OCI-LY7 (cell line): ENCODE measurements at regions of chr2 and their contacts with region 1.

Region 1: GRCh38 chr2:85538486-85539360 is at the start of gene MAT2A:
- DNase-seq: peak; percentile 95
- H3K4me3 ChIP-seq: peak within 1 kb of the TSS; percentile 100
- H3K27ac ChIP-seq: peak within 1 kb of the TSS; percentile 88
- H3K4me1 ChIP-seq: peaks cover 37% of the 10 kb centered on the region
- CTCF ChIP-seq: peak; percentile 78
- total RNA-seq, gene MAT2A: 336 and 350 TPM in 2 replicates

Region 2: DNA sequence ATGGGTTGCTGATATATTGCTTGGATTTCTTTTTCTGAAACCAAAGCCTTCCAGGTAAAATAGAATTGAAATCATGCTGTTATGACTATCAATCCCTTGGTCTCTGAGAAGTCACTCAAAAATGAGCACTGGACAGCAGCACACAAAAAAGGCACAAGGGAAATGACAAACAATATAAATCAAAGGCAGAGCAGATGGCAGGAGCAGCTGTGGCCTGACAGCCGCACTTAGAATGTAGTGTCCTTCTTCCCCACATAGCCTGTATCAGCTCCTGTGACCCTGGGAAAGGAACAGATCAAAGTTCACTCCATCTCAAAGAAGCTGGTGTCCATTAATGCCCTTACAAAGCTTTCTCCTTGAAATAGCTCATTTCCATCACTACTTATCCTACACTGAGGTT is 1406.4 kb before region 1 on chr2:
- CTCF ChIA-PET with region 1: no interaction called
- POLR2A ChIA-PET with region 1: no interaction called
- intact Hi-C with region 1: no loop called
- DNase-seq: no peak
- H3K4me3 ChIP-seq: no peak overlapping the region
- H3K27ac ChIP-seq: no peak overlapping the region
- H3K4me1 ChIP-seq: no peaks in the 10 kb centered on the region
- CTCF ChIP-seq: no peak

Region 3: GRCh38 chr2:85420536-85421259 is 118.0 kb before region 1 on chr2:
- CTCF ChIA-PET with region 1: interaction called, 7 read pairs
- POLR2A ChIA-PET with region 1: interaction called, 41 read pairs
- intact Hi-C with region 1: loop called (anchors 1 kb)
- DNase-seq: peak; percentile 87
- H3K4me3 ChIP-seq: no peak overlapping the region
- H3K27ac ChIP-seq: no peak overlapping the region
- H3K4me1 ChIP-seq: peaks cover 28% of the 10 kb centered on the region
- CTCF ChIP-seq: peak; percentile 98

Region 4: GRCh38 chr2:85551698-85552678 is 13.3 kb after region 1 on chr2:
- CTCF ChIA-PET with region 1: interaction called, 4 read pairs
- POLR2A ChIA-PET with region 1: interaction called, 48 read pairs
- intact Hi-C with region 1: no loop called
- DNase-seq: peak; percentile 83
- H3K4me3 ChIP-seq: no peak overlapping the region
- H3K27ac ChIP-seq: no peak overlapping the region
- H3K4me1 ChIP-seq: no peaks in the 10 kb centered on the region
- CTCF ChIP-seq: peak; percentile 96

Region 5: GRCh38 chr2:85577386-85578242 is 38.9 kb after region 1 on chr2 and contains the start of gene VAMP8:
- CTCF ChIA-PET with region 1: no interaction called
- POLR2A ChIA-PET with region 1: interaction called, 11 read pairs
- intact Hi-C with region 1: no loop called
- DNase-seq: peak; percentile 70
- H3K4me3 ChIP-seq: peak within 1 kb of the TSS; percentile 83
- H3K27ac ChIP-seq: peak within 1 kb of the TSS; percentile 79
- H3K4me1 ChIP-seq: peaks cover 27% of the 10 kb centered on the region
- CTCF ChIP-seq: no peak
- total RNA-seq, gene VAMP8: 112 and 156 TPM in 2 replicates